ENCODE measurements at regions of chr5 and their contacts with region 1.

Region 1: GRCh38 chr5:38467353-38468040 is 88.9 kb downstream of the LIFR start:
- DNase-seq: peak; percentile 66 to 77
- ATAC-seq: peak in 3 of 4 donors; percentile 3 to 10 (median 6)
- H3K4me3 ChIP-seq: peak overlapping the region; percentile 65
- H3K27ac ChIP-seq: peak overlapping the region; percentile 98
- H3K4me1 ChIP-seq: peaks cover 68% of the 10 kb centered on the region
- H3K27me3 ChIP-seq: no peaks in the 10 kb centered on the region
- CTCF ChIP-seq: no peak

Region 2: GRCh38 chr5:36820900-36821299 is 1646.6 kb before region 1 on chr5:
- intact Hi-C with region 1: no loop called
- DNase-seq: no peak
- ATAC-seq: no peak
- H3K4me3 ChIP-seq: no peak overlapping the region
- H3K27ac ChIP-seq: no peak overlapping the region
- H3K4me1 ChIP-seq: no peaks in the 10 kb centered on the region
- H3K27me3 ChIP-seq: no peaks in the 10 kb centered on the region
- CTCF ChIP-seq: no peak

Region 3: DNA sequence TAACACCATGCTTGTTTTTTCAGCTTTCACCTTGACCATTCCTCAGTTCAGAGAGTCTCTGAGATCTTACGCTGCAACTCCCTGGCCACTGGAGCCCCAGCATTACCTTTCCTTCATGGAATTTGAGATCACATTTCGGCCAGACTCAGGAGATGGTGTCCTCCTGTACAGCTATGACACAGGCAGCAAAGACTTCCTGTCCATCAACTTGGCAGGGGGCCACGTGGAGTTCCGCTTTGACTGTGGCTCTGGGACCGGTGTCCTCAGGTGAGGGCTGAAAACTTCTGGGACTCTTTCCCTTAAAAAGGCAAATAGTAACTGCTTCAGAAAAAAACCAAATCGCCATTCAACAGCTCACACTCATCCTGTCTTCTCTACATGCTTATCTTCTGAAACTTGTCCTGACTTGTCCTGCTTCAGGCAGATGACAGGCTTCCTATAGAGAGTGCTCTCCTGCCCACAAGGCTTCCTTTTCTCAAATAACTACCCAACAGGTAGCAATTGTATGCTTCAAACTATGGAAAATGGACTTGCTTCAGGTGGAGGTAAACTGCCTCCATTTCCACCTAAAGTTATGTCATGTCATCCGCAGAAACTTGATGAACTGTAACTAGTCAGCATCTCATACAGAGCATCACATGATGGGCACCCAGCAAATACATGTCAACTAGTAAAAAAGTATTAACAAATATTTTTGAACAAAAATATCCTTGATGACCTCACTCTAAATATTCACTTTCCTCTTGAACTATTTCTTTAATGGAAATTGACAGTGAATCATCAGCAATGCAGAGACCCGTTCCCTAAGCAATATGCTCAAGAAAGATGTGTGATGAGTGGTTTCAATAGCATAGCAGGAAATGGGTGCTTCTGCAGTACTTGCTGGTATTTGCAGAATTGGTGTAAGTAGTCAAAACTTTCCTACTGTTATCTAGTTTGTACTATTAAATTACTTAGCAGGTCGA is 40.2 kb before region 1 on chr5:
- intact Hi-C with region 1: no loop called
- DNase-seq: no peak
- ATAC-seq: peak in 3 of 4 donors; percentile 19 to 45 (median 42)
- H3K4me3 ChIP-seq: no peak overlapping the region
- H3K27ac ChIP-seq: no peak overlapping the region
- H3K4me1 ChIP-seq: peaks cover 11% of the 10 kb centered on the region
- H3K27me3 ChIP-seq: no peaks in the 10 kb centered on the region
- CTCF ChIP-seq: no peak

Region 4: GRCh38 chr5:38536968-38537367 is 69.5 kb after region 1 on chr5:
- intact Hi-C with region 1: loop called in 1 of 2 experiments (anchors 2 kb)
- DNase-seq: no peak
- ATAC-seq: no peak
- H3K4me3 ChIP-seq: no peak overlapping the region
- H3K27ac ChIP-seq: peak overlapping the region; percentile 19
- H3K4me1 ChIP-seq: peaks cover 95% of the 10 kb centered on the region
- H3K27me3 ChIP-seq: no peaks in the 10 kb centered on the region
- CTCF ChIP-seq: no peak

Region 5: GRCh38 chr5:38551030-38552017 is 83.8 kb after region 1 on chr5:
- intact Hi-C with region 1: loop called in 1 of 2 experiments (anchors 5 kb)
- DNase-seq: no peak
- ATAC-seq: peak; percentile 48 to 65 (median 64)
- H3K4me3 ChIP-seq: peak overlapping the region; percentile 0
- H3K27ac ChIP-seq: peak overlapping the region; percentile 47
- H3K4me1 ChIP-seq: peaks cover 68% of the 10 kb centered on the region
- H3K27me3 ChIP-seq: no peaks in the 10 kb centered on the region
- CTCF ChIP-seq: peak; percentile 64